ENCODE measurements at regions of chr13 and their contacts with region 1.

Region 1: DNA sequence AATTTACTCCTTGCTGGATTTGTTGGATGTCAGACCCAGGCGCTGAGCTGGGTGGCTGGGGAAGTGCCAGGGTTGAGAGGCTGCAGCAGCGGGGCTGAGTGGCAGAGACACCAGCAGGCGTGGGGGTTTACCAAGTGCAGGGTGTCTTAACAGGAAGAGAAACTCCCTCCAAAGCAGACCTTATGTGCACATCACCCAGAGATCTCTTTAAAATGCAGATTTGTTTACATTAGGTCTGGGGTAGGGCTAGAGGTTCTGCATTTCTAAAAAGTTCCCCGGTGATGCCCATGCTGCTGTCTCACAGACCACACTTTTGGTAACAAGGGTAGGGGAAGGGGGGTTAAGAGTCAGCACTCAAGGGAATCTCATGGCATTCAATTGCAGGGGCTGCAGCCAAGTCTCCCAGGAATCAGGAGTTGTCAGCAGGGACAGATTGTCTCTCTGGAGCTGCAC is 80.7 kb upstream of the OLFM4 start:
- DNase-seq: no peak
- ATAC-seq: peak; percentile 30 to 59 (median 44)
- H3K4me3 ChIP-seq: no peak overlapping the region
- H3K27ac ChIP-seq: no peak overlapping the region
- H3K4me1 ChIP-seq: no peaks in the 10 kb centered on the region
- H3K27me3 ChIP-seq: no peaks in the 10 kb centered on the region
- CTCF ChIP-seq: no peak
- POLR2A ChIP-seq: no peak

Region 2: GRCh38 chr13:52723181-52723580 is 224.8 kb before region 1 on chr13:
- intact Hi-C with region 1: no loop called
- DNase-seq: no peak
- ATAC-seq: no peak
- H3K4me3 ChIP-seq: no peak overlapping the region
- H3K27ac ChIP-seq: no peak overlapping the region
- H3K4me1 ChIP-seq: no peaks in the 10 kb centered on the region
- H3K27me3 ChIP-seq: no peaks in the 10 kb centered on the region
- CTCF ChIP-seq: no peak
- POLR2A ChIP-seq: no peak

Region 3: GRCh38 chr13:53191091-53191490 is 243.1 kb after region 1 on chr13:
- intact Hi-C with region 1: loop called in 1 of 2 experiments (anchors 5 kb)
- DNase-seq: no peak
- ATAC-seq: no peak
- H3K4me3 ChIP-seq: no peak overlapping the region
- H3K27ac ChIP-seq: no peak overlapping the region
- H3K4me1 ChIP-seq: no peaks in the 10 kb centered on the region
- H3K27me3 ChIP-seq: no peaks in the 10 kb centered on the region
- CTCF ChIP-seq: no peak
- POLR2A ChIP-seq: no peak